Activated CD8-positive, alpha-beta T cell treated with anti-CD3 and anti-CD28 coated beads for 36 hours (primary cell): ENCODE measurements at regions of chr1 and their contacts with region 1.

Region 1: DNA sequence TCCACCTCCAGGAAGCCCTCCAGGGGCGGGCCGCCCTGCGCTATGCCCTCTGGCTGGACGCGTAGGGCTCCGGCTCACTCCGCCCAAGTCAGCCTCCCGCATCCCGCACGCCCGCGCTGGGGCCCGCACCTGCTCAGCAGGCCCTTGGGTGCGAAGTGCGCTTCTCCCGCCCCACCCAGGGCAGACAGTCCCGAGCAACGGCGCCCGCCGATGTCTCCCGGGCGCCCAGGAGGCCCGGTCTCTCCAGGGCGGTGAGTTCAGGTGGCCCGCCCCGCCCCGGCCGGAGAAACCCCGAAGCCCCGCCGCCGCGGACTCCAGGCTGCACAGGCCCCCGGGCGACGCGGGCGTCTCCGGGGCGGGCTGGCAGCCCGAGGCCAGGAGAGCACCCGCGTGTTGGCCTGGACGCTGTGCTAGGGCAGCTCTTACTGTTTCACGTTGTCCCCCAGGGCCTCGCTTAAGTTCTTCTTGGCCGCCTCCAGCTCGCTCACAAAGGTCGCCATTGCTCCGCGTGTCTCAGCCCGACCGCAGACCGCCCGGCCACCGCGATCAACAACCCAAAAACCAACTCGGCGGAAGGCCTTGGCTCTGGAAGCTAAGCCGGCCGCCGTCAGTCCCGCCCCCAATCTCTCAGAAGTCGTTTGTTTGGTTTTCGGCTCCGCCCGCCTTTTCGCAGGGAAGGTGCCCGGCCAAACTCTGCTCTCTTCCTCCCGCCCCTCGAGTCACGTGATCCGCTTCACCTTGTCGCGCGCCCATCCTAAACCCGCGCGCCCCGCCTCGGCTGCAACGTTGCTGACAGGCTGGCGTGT is at the start of gene TADA1:
- DNase-seq: peak; percentile 100
- ATAC-seq: peak; percentile 92
- H3K4me3 Mint-ChIP-seq: peak within 1 kb of the TSS; percentile 92
- H3K27ac Mint-ChIP-seq: peak within 1 kb of the TSS; percentile 99
- H3K4me1 Mint-ChIP-seq: peaks cover 42% of the 10 kb centered on the region
- H3K27me3 Mint-ChIP-seq: peaks cover 4% of the 10 kb centered on the region
- CTCF ChIP-seq: no peak
- total RNA-seq, gene TADA1: 14.3 to 15.7 TPM

Region 2: GRCh38 chr1:166838766-166839599 is 37.0 kb before region 1 on chr1 and contains the start of gene POGK:
- CTCF ChIA-PET with region 1: interaction called, 8 read pairs
- POLR2A ChIA-PET with region 1: interaction called, 8 read pairs
- intact Hi-C with region 1: loop called (anchors 5 kb)
- DNase-seq: peak; percentile 89
- ATAC-seq: peak; percentile 96
- H3K4me3 Mint-ChIP-seq: peak within 1 kb of the TSS; percentile 84
- H3K27ac Mint-ChIP-seq: peak within 1 kb of the TSS; percentile 94
- H3K4me1 Mint-ChIP-seq: peaks cover 42% of the 10 kb centered on the region
- H3K27me3 Mint-ChIP-seq: no peaks in the 10 kb centered on the region
- CTCF ChIP-seq: no peak
- total RNA-seq, gene POGK: 33.6 to 34.4 TPM

Region 3: GRCh38 chr1:166848193-166848592 is 27.7 kb before region 1 on chr1:
- CTCF ChIA-PET with region 1: no interaction called
- POLR2A ChIA-PET with region 1: interaction called, 11 read pairs
- intact Hi-C with region 1: loop called (anchors 5 kb)
- DNase-seq: no peak
- ATAC-seq: peak; percentile 72
- H3K4me3 Mint-ChIP-seq: no peak overlapping the region
- H3K27ac Mint-ChIP-seq: peak overlapping the region; percentile 60
- H3K4me1 Mint-ChIP-seq: peaks cover 64% of the 10 kb centered on the region
- H3K27me3 Mint-ChIP-seq: no peaks in the 10 kb centered on the region
- CTCF ChIP-seq: no peak

Region 4: DNA sequence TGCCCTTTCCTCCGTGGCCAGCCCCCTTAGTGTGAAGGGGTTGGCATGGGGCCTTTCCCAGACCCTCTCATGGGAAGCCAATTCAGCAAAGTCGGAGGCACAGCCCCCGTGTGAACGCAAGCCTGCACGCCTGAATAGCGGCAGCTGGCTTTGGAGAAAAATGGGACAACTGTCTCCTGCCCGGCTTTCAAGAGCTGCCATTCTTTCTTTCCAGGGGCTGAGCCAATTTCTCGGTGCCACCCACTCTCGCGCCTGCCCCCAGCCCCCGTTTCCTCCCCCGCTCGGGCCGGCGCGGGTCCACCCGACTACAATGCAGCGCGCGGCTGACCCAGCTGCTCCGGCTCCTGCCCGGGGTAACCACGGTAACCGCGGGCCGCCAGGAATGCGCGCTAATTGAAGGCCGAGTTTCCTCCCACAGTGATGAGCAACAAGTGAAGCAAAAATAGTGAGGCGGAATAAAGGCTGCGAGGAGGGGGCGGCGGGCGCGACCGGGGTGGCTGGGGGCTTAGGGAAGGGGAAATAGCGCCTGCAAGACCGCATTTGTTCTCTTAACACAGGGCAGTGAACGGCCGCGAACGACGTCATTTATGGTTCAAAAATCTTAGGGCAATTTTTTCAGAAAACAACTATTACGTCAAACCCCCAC is 71.6 kb after region 1 on chr1:
- CTCF ChIA-PET with region 1: no interaction called
- POLR2A ChIA-PET with region 1: no interaction called
- intact Hi-C with region 1: no loop called
- DNase-seq: peak; percentile 18
- ATAC-seq: no peak
- H3K4me3 Mint-ChIP-seq: peak overlapping the region; percentile 18
- H3K27ac Mint-ChIP-seq: no peak overlapping the region
- H3K4me1 Mint-ChIP-seq: peaks cover 33% of the 10 kb centered on the region
- H3K27me3 Mint-ChIP-seq: peaks cover 27% of the 10 kb centered on the region
- CTCF ChIP-seq: no peak